Activated CD8-positive, alpha-beta T cell treated with anti-CD3 and anti-CD28 coated beads for 36 hours (primary cell): ENCODE measurements at regions of chr12 and their contacts with region 1.

Region 1: GRCh38 chr12:6470375-6471163 is at the start of gene VAMP1:
- DNase-seq: peak; percentile 99
- ATAC-seq: peak; percentile 90
- H3K4me3 Mint-ChIP-seq: peak within 1 kb of the TSS; percentile 89
- H3K27ac Mint-ChIP-seq: peak within 1 kb of the TSS; percentile 88
- H3K4me1 Mint-ChIP-seq: peaks cover 44% of the 10 kb centered on the region
- H3K27me3 Mint-ChIP-seq: no peaks in the 10 kb centered on the region
- CTCF ChIP-seq: no peak
- total RNA-seq, gene VAMP1: 50.0 to 51.2 TPM

Region 2: GRCh38 chr12:6335451-6336078 is 135.0 kb before region 1 on chr12:
- CTCF ChIA-PET with region 1: interaction called, 31 read pairs
- POLR2A ChIA-PET with region 1: interaction called, 13 read pairs
- intact Hi-C with region 1: loop called (anchors 10 kb)
- DNase-seq: peak; percentile 96
- ATAC-seq: peak; percentile 71
- H3K4me3 Mint-ChIP-seq: no peak overlapping the region
- H3K27ac Mint-ChIP-seq: no peak overlapping the region
- H3K4me1 Mint-ChIP-seq: peaks cover 52% of the 10 kb centered on the region
- H3K27me3 Mint-ChIP-seq: no peaks in the 10 kb centered on the region
- CTCF ChIP-seq: peak; percentile 48

Region 3: GRCh38 chr12:6423267-6424007 is 47.1 kb before region 1 on chr12:
- CTCF ChIA-PET with region 1: interaction called, 145 read pairs
- POLR2A ChIA-PET with region 1: interaction called, 47 read pairs
- intact Hi-C with region 1: loop called (anchors 1 kb)
- DNase-seq: peak; percentile 87
- ATAC-seq: peak; percentile 55
- H3K4me3 Mint-ChIP-seq: peak overlapping the region; percentile 50
- H3K27ac Mint-ChIP-seq: peak overlapping the region; percentile 93
- H3K4me1 Mint-ChIP-seq: peaks cover 46% of the 10 kb centered on the region
- H3K27me3 Mint-ChIP-seq: no peaks in the 10 kb centered on the region
- CTCF ChIP-seq: peak; percentile 80

Region 4: DNA sequence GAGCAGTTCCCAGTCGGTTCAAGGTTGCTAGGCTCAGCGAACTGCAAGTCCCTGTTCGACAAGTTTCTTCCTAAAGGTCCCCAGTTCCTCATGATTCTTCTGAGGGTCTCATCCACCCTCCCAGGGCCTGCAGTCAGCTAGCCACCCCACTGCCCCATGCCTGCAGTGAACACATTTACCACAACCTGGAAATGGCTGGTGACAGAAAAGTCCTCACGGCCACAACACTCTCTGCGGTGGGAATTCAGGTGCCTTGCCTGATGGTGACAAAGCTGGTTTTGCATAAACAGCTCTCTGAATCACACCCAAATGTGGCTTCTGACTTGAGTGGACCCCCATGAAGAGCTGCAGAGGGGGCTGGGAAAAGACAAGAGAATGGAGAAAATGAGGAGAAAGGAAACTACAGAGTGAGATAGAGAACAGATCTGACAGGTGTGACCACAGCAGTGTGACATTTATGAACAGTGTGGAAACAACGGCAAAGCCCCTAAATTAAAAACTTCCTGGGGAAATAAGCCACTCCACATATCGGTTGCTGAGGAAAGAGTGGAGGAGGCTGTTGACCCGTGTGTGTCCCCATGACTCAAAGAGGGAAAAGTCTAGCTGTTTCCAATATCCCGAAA is 27.1 kb before region 1 on chr12:
- CTCF ChIA-PET with region 1: interaction called, 78 read pairs
- POLR2A ChIA-PET with region 1: interaction called, 110 read pairs
- intact Hi-C with region 1: no loop called
- DNase-seq: peak; percentile 84
- ATAC-seq: peak; percentile 68
- H3K4me3 Mint-ChIP-seq: peak overlapping the region; percentile 93
- H3K27ac Mint-ChIP-seq: peak overlapping the region; percentile 99
- H3K4me1 Mint-ChIP-seq: peaks cover 61% of the 10 kb centered on the region
- H3K27me3 Mint-ChIP-seq: no peaks in the 10 kb centered on the region
- CTCF ChIP-seq: no peak

Region 5: GRCh38 chr12:6488240-6488639 is 17.7 kb after region 1 on chr12:
- CTCF ChIA-PET with region 1: interaction called, 10 read pairs
- POLR2A ChIA-PET with region 1: interaction called, 22 read pairs
- intact Hi-C with region 1: no loop called
- DNase-seq: no peak
- ATAC-seq: no peak
- H3K4me3 Mint-ChIP-seq: no peak overlapping the region
- H3K27ac Mint-ChIP-seq: no peak overlapping the region
- H3K4me1 Mint-ChIP-seq: peaks cover 8% of the 10 kb centered on the region
- H3K27me3 Mint-ChIP-seq: no peaks in the 10 kb centered on the region
- CTCF ChIP-seq: no peak

Region 6: GRCh38 chr12:6540181-6540877 is 69.8 kb after region 1 on chr12:
- CTCF ChIA-PET with region 1: interaction called, 19 read pairs
- POLR2A ChIA-PET with region 1: interaction called, 20 read pairs
- intact Hi-C with region 1: no loop called
- DNase-seq: peak; percentile 59
- ATAC-seq: peak; percentile 32
- H3K4me3 Mint-ChIP-seq: peak overlapping the region; percentile 41
- H3K27ac Mint-ChIP-seq: peak overlapping the region; percentile 71
- H3K4me1 Mint-ChIP-seq: peaks cover 41% of the 10 kb centered on the region
- H3K27me3 Mint-ChIP-seq: no peaks in the 10 kb centered on the region
- CTCF ChIP-seq: no peak